Left ventricle myocardium inferior (tissue), 1 donor: ENCODE measurements at regions of chr10 and their contacts with region 1.

Region 1: GRCh38 chr10:24642622-24643417 is 80.9 kb downstream of the ARHGAP21 start:
- DNase-seq: no peak
- H3K4me3 ChIP-seq: no peak overlapping the region
- H3K27ac ChIP-seq: no peak overlapping the region
- H3K4me1 ChIP-seq: peaks cover 45% of the 10 kb centered on the region
- H3K27me3 ChIP-seq: no peaks in the 10 kb centered on the region
- CTCF ChIP-seq: peak; percentile 83

Region 2: GRCh38 chr10:24920907-24921881 is 278.4 kb after region 1 on chr10:
- intact Hi-C with region 1: no loop called
- DNase-seq: peak; percentile 32
- H3K4me3 ChIP-seq: no peak overlapping the region
- H3K27ac ChIP-seq: peak overlapping the region; percentile 25
- H3K4me1 ChIP-seq: peaks cover 10% of the 10 kb centered on the region
- H3K27me3 ChIP-seq: no peaks in the 10 kb centered on the region
- CTCF ChIP-seq: no peak

Region 3: GRCh38 chr10:24989867-24990266 is 347.0 kb after region 1 on chr10:
- intact Hi-C with region 1: loop called (anchors 10 kb)
- DNase-seq: no peak
- H3K4me3 ChIP-seq: no peak overlapping the region
- H3K27ac ChIP-seq: no peak overlapping the region
- H3K4me1 ChIP-seq: peaks cover 13% of the 10 kb centered on the region
- H3K27me3 ChIP-seq: no peaks in the 10 kb centered on the region
- CTCF ChIP-seq: peak; percentile 33

Region 4: DNA sequence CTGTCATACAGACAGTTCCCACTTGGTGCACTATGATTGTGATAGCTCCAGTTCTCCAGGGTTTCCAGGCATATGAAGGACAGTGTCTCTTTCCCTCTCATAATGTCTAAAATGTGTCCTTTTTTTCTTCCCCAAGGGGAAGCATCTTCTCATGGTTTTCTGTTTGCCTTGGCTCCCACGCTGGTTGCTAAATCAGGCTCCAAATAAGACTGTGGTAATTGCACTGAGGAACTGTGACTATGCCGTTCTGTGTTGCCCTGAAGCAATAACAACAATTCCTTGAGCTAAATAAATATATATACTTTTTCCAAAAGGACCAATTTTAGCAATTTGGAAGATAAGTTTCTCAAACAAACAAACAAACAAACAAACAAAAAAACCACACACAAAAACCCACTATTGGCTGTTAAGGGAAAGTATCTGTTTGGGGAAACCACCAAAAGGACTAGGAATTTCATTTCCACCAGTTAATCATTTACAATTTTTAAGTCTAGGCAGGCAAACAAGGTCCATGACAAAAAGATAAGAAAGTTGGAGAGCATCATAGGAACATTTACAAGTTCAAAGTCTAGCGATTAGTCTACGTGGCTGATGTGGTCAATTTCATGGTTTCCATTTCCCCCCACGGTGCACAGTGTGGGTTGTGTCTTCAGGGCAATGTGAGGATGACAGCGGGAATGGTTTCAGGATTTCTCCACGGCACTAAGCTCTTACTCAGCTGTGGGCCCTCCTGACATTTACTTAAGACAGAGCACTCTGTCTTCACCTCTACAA is 436.0 kb after region 1 on chr10:
- intact Hi-C with region 1: loop called (anchors 10 kb)
- DNase-seq: no peak
- H3K4me3 ChIP-seq: no peak overlapping the region
- H3K27ac ChIP-seq: no peak overlapping the region
- H3K4me1 ChIP-seq: peaks cover 30% of the 10 kb centered on the region
- H3K27me3 ChIP-seq: no peaks in the 10 kb centered on the region
- CTCF ChIP-seq: no peak